A549 (cell line): ENCODE measurements at regions of chr20 and their contacts with region 1.

Region 1: DNA sequence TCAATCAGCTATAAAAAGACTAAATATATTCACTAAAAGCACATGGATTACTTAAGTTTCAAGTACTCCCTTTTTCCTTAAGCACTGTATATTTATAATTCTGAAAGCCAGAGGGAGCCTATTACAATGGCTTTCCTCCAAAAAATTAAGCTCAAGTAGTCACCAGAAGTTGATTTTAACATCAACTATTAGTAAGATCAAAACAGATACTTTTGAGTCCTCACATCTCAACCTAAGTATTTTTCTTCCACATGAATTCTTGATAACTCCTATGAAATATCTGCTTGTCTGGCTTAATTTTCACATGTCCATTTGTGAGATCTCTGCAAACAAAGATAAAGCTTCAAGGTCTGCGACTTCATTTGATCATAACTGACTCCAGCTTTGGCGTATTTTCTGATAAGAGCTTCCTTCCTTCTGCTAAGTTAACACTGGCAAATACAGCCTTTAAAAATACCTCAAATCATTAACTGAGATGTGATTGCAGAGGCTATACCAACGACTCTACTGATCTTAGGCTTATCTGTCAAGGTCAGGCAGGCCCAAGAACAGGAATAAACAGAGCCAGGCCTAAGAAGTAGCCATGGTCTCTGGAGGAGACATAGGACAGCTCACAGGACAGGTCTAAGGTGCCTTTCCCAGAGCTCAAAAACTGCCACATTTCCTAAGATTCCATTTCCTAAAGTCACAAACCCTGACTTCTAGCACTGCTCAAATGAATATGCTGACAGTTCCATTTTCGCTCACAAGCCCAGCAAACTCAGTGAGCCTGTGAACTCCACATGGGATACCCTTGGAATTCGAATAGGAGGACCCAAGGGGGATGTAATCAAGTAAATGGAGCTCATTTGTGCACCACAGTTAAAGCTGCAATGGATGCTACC is 10.0 kb downstream of the SNX5 start:
- DNase-seq: no peak
- ATAC-seq: peak; percentile 41 to 52; a peak in 5 of 6 replicates
- H3K4me3 ChIP-seq: no peak overlapping the region
- H3K27ac ChIP-seq: peak overlapping the region in 1 of 2 experiments; percentile 8; a peak in 1 of 6 replicates
- H3K4me1 ChIP-seq: peaks cover 63% of the 10 kb centered on the region
- CTCF ChIP-seq: no peak
- EP300 ChIP-seq: no peak
- POLR2A ChIP-seq: no peak
- RAD21 ChIP-seq: no peak

Region 2: DNA sequence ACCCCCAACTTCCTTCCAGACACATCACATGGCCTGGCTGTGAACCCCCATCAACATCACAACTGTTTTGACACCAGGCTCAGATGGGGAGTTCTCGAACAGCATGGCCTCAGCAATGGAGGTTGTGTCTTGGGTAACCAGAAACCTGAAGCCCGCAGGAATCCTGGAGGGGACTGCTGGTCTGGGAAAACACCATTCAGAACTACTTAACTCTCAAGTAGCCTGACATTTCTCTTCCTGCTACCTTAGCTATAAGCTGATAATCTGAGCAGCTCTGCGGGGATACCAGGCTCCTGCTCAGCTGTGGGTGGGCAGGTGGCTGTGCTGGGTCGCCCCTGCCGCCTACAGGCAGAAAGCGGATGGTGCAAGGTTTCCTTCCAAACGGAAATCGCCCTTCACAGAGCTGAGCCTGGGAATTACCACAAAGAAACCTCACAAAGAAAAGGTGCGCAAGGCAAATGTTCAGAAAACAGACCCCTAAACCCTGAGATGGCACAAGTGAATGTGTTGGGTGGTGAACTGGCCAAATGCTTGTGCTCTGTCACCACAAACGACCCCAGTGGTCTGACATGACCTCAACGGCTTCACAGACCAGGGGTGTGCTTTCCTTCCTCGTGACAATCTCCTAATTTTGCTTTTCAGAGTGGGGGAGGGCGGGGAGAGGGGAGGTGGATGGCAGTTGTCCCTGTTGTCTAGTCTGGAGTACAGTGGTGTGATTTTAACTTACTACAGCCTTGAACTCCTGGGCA is 19.6 kb before region 1 on chr20:
- CTCF ChIA-PET with region 1: interaction called, 24 read pairs
- POLR2A ChIA-PET with region 1: interaction called, 3 read pairs
- DNase-seq: peak; percentile 58 to 75
- ATAC-seq: peak; percentile 68 to 83
- H3K4me3 ChIP-seq: no peak overlapping the region
- H3K27ac ChIP-seq: no peak overlapping the region
- H3K4me1 ChIP-seq: no peaks in the 10 kb centered on the region; the same call in 2 of the 3 replicates
- CTCF ChIP-seq: peak; percentile 61
- EP300 ChIP-seq: no peak
- POLR2A ChIP-seq: no peak
- RAD21 ChIP-seq: peak; percentile 74 to 75